HepG2 (cell line): ENCODE measurements at regions of chr11 and their contacts with region 1.

Region 1: DNA sequence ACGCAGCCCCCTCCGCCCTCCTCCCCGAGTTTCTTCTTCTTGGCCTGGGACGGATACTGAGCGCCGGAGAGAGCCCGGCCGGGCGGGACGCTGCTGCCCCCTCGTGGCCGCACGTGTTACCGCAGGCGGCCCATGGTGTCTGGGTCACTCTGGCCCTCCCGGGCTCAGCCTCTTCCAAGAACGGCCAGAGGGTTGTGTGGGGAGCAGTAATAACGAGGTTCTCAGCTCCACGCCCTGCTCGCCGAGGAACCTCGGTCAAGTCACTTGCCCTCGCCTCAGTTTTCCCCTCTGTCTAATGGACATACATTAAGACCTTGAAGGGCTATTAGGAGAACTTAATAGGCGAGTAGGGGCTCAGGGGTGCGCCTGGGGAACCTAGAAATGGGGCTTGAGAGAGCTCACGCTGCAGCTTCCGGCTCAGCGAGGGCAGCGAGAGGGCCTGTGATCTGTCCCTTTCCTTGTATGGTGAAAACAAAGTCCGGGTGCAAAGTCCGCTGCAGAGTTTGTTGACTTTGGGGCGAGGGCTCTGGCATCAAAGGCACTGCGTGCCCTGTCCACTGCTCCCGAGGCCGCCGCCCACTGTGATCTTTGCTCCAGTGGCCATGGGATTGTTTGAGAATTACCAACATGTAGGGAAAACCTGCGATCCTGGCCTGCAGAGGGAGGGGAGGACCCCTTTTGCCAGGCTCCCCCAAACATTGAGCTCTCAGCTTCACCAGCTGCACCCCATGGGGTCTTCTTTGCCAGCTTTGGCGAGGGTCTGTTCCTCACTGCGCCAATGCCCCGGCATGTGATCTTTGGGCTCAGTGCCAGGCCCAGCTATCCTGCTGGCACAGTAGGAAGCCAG is 14.4 kb upstream of the LRP5 start:
- DNase-seq: peak; percentile 98
- ATAC-seq: peak; percentile 85
- H3K4me3 ChIP-seq: peak overlapping the region; percentile 68 to 83 (median 69)
- H3K27ac ChIP-seq: peak overlapping the region; percentile 100
- H3K4me1 ChIP-seq: peaks cover 59% of the 10 kb centered on the region
- H3K27me3 ChIP-seq: no peaks in the 10 kb centered on the region; a peak in 1 of 5 replicates
- CTCF ChIP-seq: peak; percentile 97
- EP300 ChIP-seq: peak; percentile 98
- POLR2A ChIP-seq: peak; percentile 73 to 81
- RAD21 ChIP-seq: peak; percentile 96

Region 2: GRCh38 chr11:68127714-68128681 is 170.0 kb before region 1 on chr11:
- CTCF ChIA-PET with region 1: no interaction called
- POLR2A ChIA-PET with region 1: interaction called, 13 read pairs
- in situ Hi-C with region 1: no loop called
- intact Hi-C with region 1: no loop called
- DNase-seq: peak; percentile 90
- ATAC-seq: peak; percentile 84
- H3K4me3 ChIP-seq: peak overlapping the region; percentile 59 to 78 (median 62)
- H3K27ac ChIP-seq: peak overlapping the region; percentile 99
- H3K4me1 ChIP-seq: peaks cover 67% of the 10 kb centered on the region
- H3K27me3 ChIP-seq: no peaks in the 10 kb centered on the region
- CTCF ChIP-seq: peak; percentile 37; the same call in 1 of the 2 replicates
- EP300 ChIP-seq: peak in 1 of 2 experiments; percentile 74; a peak in 3 of 4 replicates
- POLR2A ChIP-seq: no peak
- RAD21 ChIP-seq: peak; percentile 46

Region 3: GRCh38 chr11:68257475-68258362 is 40.3 kb before region 1 on chr11:
- CTCF ChIA-PET with region 1: interaction called, 43 read pairs
- POLR2A ChIA-PET with region 1: interaction called, 127 read pairs
- in situ Hi-C with region 1: loop called (anchors 5 kb)
- intact Hi-C with region 1: loop called (anchors 1 kb)
- DNase-seq: peak; percentile 83
- ATAC-seq: peak; percentile 76
- H3K4me3 ChIP-seq: peak overlapping the region in 1 of 3 experiments; percentile 17; a peak in 1 of 6 replicates
- H3K27ac ChIP-seq: no peak overlapping the region
- H3K4me1 ChIP-seq: peaks cover 33% of the 10 kb centered on the region
- H3K27me3 ChIP-seq: no peaks in the 10 kb centered on the region; a peak in 1 of 5 replicates
- CTCF ChIP-seq: peak; percentile 92
- EP300 ChIP-seq: no peak
- POLR2A ChIP-seq: 0 out of 4 replicates have a peak, but pooled peaks of 1 of the 2 experiments have one; percentile 16
- RAD21 ChIP-seq: peak; percentile 93

Region 4: GRCh38 chr11:68287419-68287818 is 10.6 kb before region 1 on chr11:
- CTCF ChIA-PET with region 1: no interaction called
- POLR2A ChIA-PET with region 1: interaction called, 14 read pairs
- in situ Hi-C with region 1: no loop called
- intact Hi-C with region 1: no loop called
- DNase-seq: no peak
- ATAC-seq: no peak
- H3K4me3 ChIP-seq: no peak overlapping the region
- H3K27ac ChIP-seq: no peak overlapping the region
- H3K4me1 ChIP-seq: peaks cover 3% of the 10 kb centered on the region
- H3K27me3 ChIP-seq: no peaks in the 10 kb centered on the region
- CTCF ChIP-seq: no peak
- EP300 ChIP-seq: no peak
- POLR2A ChIP-seq: no peak
- RAD21 ChIP-seq: no peak

Region 5: DNA sequence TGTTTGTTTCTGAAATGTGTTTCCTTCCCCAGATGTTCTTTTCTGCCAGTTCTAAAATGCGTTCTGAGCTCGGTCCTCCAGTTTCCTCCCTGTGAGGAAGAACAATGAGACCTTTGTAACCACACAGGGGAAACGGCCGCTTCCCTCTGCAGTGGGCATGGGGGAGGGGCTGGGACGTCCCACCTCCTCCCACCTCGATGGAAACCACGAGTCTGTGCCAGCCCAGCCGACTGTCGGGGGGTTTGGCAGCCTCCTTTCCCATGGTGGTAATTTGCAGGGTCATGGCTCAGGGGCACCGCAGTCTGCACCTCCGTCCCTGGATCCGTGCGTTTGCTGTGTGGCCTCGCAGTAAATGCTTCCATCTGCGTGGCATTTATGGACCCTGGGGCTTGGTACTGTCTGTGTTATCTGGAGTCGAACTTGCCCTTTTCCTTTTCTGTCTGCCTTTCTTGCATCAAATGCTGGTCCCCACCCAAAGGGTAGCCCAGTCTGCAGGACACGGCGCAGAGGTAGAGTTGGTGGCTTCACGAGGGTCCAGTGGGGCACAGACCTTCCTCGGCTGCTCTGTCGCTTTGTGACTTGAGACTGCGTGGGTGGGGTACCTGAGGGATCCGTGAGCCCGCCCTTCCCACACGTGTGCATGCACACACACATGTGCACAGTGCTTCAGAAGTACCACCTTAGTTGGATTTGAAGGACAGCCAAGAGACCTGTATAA is 30.5 kb after region 1 on chr11:
- CTCF ChIA-PET with region 1: no interaction called
- POLR2A ChIA-PET with region 1: interaction called, 106 read pairs
- in situ Hi-C with region 1: no loop called
- intact Hi-C with region 1: no loop called
- DNase-seq: peak; percentile 86
- ATAC-seq: peak; percentile 44
- H3K4me3 ChIP-seq: peak overlapping the region in 1 of 3 experiments; percentile 27; a peak in 1 of 6 replicates
- H3K27ac ChIP-seq: peak overlapping the region; percentile 82
- H3K4me1 ChIP-seq: peaks cover 100% of the 10 kb centered on the region
- H3K27me3 ChIP-seq: no peaks in the 10 kb centered on the region
- CTCF ChIP-seq: no peak
- EP300 ChIP-seq: peak in 1 of 2 experiments; percentile 52; a peak in 1 of 4 replicates
- POLR2A ChIP-seq: no peak
- RAD21 ChIP-seq: no peak

Region 6: DNA sequence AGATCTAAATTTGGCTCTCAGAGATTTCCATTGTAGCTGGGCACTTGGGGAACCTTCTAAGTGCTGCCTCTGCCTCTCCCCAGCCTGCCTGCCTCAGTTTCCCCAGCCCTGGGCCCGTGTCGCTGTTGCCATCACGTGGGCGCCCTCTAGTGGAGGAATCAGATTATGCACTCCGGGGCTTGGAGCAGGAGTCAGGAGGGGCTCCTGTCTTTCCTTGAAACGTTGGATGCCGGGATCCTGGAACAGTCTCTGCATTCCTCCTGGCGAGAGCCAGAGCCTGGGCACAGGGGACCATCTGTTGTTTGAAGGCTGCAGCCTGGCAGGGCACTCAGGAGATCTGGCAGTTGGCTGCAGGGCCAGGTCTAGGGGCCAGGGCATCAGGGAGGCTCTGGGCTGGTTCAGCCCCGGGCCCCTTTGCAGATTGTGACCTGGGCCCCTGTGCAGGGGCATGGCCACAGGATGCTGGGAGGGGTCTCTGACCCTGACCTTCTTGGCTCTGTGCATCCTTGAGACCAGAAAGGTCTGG is 86.0 kb after region 1 on chr11:
- CTCF ChIA-PET with region 1: no interaction called
- POLR2A ChIA-PET with region 1: interaction called, 54 read pairs
- in situ Hi-C with region 1: no loop called
- intact Hi-C with region 1: no loop called
- DNase-seq: peak; percentile 43
- ATAC-seq: no peak
- H3K4me3 ChIP-seq: no peak overlapping the region
- H3K27ac ChIP-seq: no peak overlapping the region
- H3K4me1 ChIP-seq: peaks cover 46% of the 10 kb centered on the region
- H3K27me3 ChIP-seq: no peaks in the 10 kb centered on the region
- CTCF ChIP-seq: peak; percentile 89
- EP300 ChIP-seq: no peak
- POLR2A ChIP-seq: 0 out of 4 replicates have a peak, but pooled peaks of 1 of the 2 experiments have one; percentile 12
- RAD21 ChIP-seq: peak; percentile 91